Right cardiac atrium (tissue), 5 donors: ENCODE measurements at regions of chr11 and their contacts with region 1.

Region 1: GRCh38 chr11:43282607-43283440 is 29.0 kb upstream of the API5 start:
- DNase-seq: peak; percentile 33 to 65 (median 62)
- ATAC-seq: peak; percentile 29 to 48
- H3K4me3 ChIP-seq: no peak overlapping the region
- H3K27ac ChIP-seq: no peak overlapping the region
- H3K4me1 ChIP-seq: no peaks in the 10 kb centered on the region
- H3K27me3 ChIP-seq: no peaks in the 10 kb centered on the region

Region 2: DNA sequence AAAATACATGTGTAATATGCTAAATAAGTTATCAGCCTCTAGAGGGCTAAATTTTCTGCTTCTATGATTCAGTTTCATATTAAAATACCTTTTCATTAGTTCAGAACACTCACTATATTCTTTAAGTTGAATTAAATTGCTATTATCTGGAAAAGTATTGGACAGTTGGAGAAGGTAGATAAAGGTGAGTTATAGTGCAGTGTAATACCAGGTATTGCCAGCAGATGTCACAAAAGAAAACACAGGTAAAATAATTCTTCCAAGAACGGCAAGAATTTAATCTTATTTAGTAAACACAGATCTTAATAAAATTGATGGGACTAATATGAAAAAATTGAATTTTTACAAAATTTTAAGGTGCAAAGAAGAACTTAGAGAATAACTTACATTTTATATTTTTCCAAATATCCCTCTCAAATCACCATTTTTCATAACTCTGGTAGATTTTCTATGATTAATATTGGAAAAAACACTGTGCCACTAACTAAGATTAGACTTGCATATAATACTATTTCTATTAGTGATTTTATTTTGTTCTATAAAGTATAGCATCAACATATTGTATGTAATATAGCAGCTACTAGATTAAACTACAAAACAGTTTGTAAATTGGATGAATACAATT is 1821.7 kb before region 1 on chr11:
- intact Hi-C with region 1: loop called in 1 of 4 experiments (anchors 10 kb)
- DNase-seq: no peak
- ATAC-seq: no peak
- H3K4me3 ChIP-seq: no peak overlapping the region
- H3K27ac ChIP-seq: no peak overlapping the region
- H3K4me1 ChIP-seq: no peaks in the 10 kb centered on the region
- H3K27me3 ChIP-seq: no peaks in the 10 kb centered on the region

Region 3: DNA sequence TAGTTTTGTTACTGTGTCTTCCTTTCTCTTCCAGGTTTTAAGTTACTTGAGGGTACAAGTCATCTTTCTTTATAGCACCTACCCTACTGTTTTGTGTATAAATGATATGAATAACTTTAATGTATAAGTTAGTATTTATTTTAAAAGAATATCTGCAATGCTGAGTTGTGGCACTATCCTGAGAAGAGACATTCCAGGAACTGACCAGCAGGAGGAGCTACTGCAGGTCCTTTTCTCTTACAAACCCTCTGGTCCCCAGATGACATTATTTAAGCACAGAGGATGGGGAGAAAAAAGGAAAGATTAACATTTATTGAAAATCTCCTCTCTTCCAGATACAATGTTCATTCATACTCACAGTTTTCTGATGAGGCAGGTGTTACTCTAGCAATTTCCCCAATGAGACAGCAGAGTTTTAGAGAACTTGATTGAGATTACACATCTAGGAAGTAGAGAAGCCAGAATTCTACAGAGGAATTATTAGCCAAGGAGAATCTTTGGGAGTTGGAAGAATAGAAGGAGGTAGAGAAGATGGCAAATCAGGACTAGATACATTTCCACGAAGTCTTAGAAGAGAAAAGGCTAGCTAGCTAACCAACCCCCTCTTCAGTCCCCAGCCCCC is 512.3 kb before region 1 on chr11:
- intact Hi-C with region 1: loop called in 2 of 4 experiments (anchors 5 kb)
- DNase-seq: no peak
- ATAC-seq: no peak
- H3K4me3 ChIP-seq: no peak overlapping the region
- H3K27ac ChIP-seq: no peak overlapping the region
- H3K4me1 ChIP-seq: no peaks in the 10 kb centered on the region
- H3K27me3 ChIP-seq: no peaks in the 10 kb centered on the region

Region 4: GRCh38 chr11:43376594-43376993 is 93.8 kb after region 1 on chr11:
- intact Hi-C with region 1: no loop called
- DNase-seq: no peak
- ATAC-seq: no peak
- H3K4me3 ChIP-seq: no peak overlapping the region
- H3K27ac ChIP-seq: no peak overlapping the region
- H3K4me1 ChIP-seq: no peaks in the 10 kb centered on the region
- H3K27me3 ChIP-seq: no peaks in the 10 kb centered on the region